Vagina (tissue), 2 donors: ENCODE measurements at regions of chr2 and their contacts with region 1.

Region 1: DNA sequence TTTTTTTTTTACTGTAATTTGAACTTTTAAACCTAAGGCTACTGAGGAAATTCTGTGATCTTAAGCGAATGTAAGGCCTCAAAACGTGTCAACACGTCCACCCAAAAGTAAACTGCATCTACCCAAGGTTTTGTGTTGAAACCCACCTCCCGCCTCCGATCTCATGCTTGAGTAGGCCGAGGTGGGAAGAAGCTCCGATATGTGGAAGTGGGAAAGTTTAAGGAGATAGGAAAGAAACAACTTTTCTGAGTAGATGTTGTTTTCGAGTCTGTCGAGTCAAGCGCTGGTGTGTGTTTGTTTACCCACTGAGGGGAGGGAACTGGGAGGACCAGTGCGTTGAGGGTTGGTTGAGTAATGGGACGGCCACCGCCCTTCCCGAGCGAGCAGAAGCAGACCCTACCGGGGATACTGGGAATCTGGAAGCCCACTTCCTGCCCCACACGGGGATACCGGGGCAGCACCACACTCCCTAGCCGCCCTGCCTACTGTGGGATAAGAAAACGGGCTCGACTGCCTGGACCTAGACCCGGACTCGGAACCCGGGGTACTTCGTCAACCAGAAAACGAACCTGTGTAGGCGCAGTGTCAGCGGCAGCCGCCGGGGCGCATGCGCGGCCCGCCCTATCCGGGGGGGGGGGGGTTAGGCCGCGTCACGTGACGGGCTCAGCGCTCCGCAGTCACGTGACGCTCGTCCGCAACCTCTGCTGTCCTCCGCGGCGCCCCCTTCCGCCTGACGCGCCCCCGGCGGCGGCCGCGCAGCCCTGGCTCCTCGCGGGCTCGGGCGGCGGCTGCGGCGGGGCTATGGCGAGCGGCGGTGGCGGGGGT is at the start of gene RETREG2:
- DNase-seq: peak in 1 of 2 donors; percentile 97
- H3K4me3 ChIP-seq: peak within 1 kb of the TSS; percentile 71 to 93
- H3K27ac ChIP-seq: peak within 1 kb of the TSS; percentile 99
- H3K4me1 ChIP-seq: peaks cover 41% of the 10 kb centered on the region
- H3K27me3 ChIP-seq: no peaks in the 10 kb centered on the region
- CTCF ChIP-seq: peak; percentile 5 to 88 (median 20)
- POLR2A ChIP-seq: peak; percentile 41 to 99
- total RNA-seq, gene RETREG2: 43.7 TPM

Region 2: GRCh38 chr2:218216674-218217359 is 960.9 kb before region 1 on chr2 and contains the start of gene ARPC2:
- intact Hi-C with region 1: no loop called
- DNase-seq: peak in 1 of 2 donors; percentile 94
- H3K4me3 ChIP-seq: peak within 1 kb of the TSS; percentile 95 to 97
- H3K27ac ChIP-seq: peak within 1 kb of the TSS; percentile 92
- H3K4me1 ChIP-seq: peaks cover 49% of the 10 kb centered on the region
- H3K27me3 ChIP-seq: no peaks in the 10 kb centered on the region
- CTCF ChIP-seq: peak in 1 of 3 experiments; percentile 51
- POLR2A ChIP-seq: peak in 1 of 2 donors; percentile 78
- total RNA-seq, gene ARPC2: 284 TPM

Region 3: GRCh38 chr2:219218732-219219701 is 41.3 kb after region 1 on chr2 and contains the start of gene ABCB6:
- intact Hi-C with region 1: loop called (anchors 2 kb)
- DNase-seq: peak in 1 of 2 donors; percentile 97
- H3K4me3 ChIP-seq: peak within 1 kb of the TSS; percentile 45 to 60
- H3K27ac ChIP-seq: peak within 1 kb of the TSS; percentile 84
- H3K4me1 ChIP-seq: peaks cover 40% of the 10 kb centered on the region
- H3K27me3 ChIP-seq: no peaks in the 10 kb centered on the region
- CTCF ChIP-seq: no peak
- POLR2A ChIP-seq: peak in 1 of 2 donors; percentile 53
- total RNA-seq, gene ABCB6: 23.8 TPM